Colonic mucosa (tissue), 4 donors: ENCODE measurements at regions of chr17 and their contacts with region 1.

Region 1: DNA sequence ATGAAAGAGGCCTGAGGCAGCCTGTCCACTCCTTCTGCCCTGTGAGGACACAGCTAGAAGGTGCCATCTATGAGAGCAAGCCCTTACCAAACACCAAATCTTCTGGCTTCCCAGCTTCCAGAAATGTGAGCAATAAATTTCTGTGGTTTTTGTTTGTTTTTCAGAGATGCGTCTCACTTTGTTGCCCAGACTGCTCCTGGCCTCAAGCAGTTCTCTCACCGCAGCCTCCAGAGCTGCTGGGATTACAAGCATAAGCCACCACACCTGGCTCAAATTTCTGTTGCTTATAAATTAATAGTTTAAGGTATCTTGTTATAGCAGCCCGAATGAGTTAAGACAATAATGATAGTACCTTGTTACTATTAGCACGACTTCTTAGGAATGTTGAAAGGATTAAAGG is 12.5 kb upstream of the SLC16A11 start:
- DNase-seq: no peak
- H3K4me3 ChIP-seq: no peak overlapping the region
- H3K27ac ChIP-seq: no peak overlapping the region
- H3K4me1 ChIP-seq: no peaks in the 10 kb centered on the region
- H3K27me3 ChIP-seq: no peaks in the 10 kb centered on the region
- CTCF ChIP-seq: no peak

Region 2: DNA sequence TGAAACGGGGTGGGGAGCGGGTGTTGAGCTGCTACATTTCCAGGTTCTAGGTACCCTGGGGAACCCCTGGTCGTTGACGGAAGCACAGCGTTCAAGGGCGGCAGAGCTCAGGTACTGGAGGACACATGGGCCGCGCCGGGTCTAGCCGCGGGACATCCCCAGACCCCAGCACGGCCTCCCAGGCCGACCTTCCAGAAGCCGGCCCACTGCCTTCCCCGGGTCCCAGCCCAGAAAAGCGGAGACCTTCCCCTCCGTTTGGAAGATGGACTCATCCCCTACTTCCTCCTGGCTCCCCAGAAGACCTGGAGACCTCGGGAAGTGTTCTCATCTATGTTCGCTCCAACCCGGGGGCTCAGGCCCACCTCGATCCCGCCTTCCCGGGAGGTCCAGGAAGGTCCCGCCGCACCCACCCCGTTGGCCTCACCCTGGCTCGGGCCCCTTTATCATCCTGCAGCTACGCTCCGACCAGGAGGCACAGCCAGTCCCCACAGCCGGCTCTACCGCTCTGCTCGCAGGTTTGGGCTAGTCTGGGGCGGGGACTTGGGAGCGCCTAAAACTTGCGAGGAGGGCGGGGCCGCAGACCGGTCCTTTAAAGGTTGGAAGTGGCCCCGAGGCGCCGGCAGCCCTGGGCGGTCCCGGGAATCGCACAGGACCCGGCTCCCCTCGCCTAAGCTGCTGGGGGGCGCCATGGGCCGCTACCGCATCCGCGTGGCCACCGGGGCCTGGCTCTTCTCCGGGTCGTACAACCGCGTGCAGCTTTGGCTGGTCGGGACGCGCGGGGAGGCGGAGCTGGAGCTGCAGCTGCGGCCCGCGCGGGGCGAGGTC is 60.7 kb before region 1 on chr17 and contains the start of gene ALOX12:
- intact Hi-C with region 1: no loop called
- DNase-seq: peak; percentile 67
- H3K4me3 ChIP-seq: peak within 1 kb of the TSS; percentile 24
- H3K27ac ChIP-seq: no peak within 1 kb of the TSS
- H3K4me1 ChIP-seq: peaks cover 5% of the 10 kb centered on the region
- H3K27me3 ChIP-seq: no peaks in the 10 kb centered on the region
- CTCF ChIP-seq: no peak
- total RNA-seq, gene ALOX12: 2.0 TPM in 1 of 2 donors, not detected in the other

Region 3: GRCh38 chr17:7136266-7136877 is 80.0 kb after region 1 on chr17:
- intact Hi-C with region 1: loop called (anchors 2 kb)
- DNase-seq: peak; percentile 77
- H3K4me3 ChIP-seq: no peak overlapping the region
- H3K27ac ChIP-seq: no peak overlapping the region
- H3K4me1 ChIP-seq: no peaks in the 10 kb centered on the region
- H3K27me3 ChIP-seq: no peaks in the 10 kb centered on the region
- CTCF ChIP-seq: peak; percentile 89